Head of caudate nucleus (tissue), 42 donors: ENCODE measurements at regions of chr9 and their contacts with region 1.

Region 1: DNA sequence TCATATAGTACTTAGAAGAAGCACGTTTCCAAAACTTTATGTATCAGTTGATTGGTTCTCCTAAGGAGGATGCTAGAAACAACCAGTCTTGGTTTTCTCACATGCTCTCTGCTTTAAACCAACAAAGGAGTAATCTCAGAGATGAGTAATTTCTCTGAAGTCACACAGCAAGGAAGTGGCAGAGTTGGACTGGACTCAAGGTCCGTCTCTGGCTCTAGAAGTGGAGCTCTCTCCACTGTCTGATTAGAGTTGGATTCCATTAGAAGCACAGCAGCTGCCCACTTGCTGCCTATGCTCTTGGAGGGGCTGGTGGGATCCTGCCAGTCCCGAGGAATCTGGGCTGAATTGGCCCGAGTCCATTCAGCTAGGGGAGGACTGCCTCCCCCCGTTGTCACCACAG is 21.0 kb downstream of the RALGPS1 start:
- DNase-seq: peak in 1 of 42 donors; percentile 3

Region 2: DNA sequence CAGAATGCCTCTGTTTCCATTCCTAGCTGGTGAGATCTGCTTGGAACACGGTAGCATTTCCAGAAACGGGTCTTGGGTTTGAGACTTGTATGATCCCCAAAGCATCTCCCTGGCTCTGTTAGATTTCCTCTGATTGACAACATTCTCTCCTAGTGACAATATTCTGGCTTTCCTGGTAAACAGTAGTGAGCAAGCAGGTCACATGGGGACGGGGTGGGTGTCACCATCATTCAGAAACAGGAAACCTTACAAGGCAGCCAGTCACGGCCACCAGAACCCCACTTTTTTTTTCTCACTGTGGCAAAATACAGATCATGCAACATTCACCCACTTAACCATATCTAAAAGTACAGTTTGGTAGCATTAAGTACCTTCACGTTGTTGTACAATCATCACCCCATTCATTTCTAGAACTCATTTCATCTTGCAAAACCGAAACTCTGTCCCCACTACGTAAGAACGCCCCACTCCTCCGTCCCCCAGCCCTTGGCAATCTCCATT is 412.0 kb before region 1 on chr9:
- intact Hi-C with region 1: no loop called
- DNase-seq: no peak

Region 3: GRCh38 chr9:126781186-126782052 is 154.2 kb before region 1 on chr9:
- intact Hi-C with region 1: no loop called
- DNase-seq: peak; percentile 76 to 96 (median 88)

Region 4: DNA sequence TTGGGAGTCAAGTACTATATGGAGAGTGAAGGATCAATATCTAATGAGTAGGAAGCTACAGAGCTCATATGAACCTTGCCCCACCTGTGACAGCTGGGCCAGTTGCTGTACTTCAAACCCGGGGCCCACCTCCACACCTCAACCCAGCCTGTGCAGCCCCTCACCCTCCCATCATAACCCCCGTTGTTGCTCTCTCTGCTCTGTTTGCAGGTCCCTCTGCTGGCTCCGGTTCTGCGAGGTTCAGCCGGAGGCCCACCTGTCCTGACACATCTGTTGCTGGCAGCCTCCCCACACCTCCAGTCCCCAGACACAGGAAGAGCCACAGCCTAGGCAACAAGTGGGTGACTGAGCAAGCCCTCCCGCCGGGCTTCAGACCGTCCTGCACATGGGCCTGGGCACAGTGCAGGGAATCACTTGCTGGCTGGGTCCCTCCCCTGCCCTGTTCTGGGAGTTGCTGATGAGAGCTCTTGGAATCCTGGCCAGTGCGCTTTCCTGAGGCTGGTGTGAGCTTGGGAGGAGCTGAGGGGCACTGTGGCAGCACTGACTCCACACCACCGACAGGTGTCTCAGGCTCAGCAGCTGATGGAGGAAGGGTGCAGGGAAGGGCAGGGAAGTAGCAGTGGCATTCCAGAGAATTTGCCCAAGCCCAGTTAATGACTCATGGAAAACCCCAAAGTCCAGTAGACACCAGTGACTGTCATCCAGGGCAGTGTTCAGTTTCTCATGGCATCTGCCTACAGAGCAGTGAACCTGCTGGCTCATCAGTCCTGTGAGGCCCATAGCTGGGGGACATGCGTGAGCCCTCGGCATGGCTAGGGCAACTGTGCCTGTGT is 259.5 kb after region 1 on chr9:
- intact Hi-C with region 1: loop called (anchors 2 kb)
- DNase-seq: no peak